ENCODE measurements at regions of chr12 and their contacts with region 1.

Region 1: DNA sequence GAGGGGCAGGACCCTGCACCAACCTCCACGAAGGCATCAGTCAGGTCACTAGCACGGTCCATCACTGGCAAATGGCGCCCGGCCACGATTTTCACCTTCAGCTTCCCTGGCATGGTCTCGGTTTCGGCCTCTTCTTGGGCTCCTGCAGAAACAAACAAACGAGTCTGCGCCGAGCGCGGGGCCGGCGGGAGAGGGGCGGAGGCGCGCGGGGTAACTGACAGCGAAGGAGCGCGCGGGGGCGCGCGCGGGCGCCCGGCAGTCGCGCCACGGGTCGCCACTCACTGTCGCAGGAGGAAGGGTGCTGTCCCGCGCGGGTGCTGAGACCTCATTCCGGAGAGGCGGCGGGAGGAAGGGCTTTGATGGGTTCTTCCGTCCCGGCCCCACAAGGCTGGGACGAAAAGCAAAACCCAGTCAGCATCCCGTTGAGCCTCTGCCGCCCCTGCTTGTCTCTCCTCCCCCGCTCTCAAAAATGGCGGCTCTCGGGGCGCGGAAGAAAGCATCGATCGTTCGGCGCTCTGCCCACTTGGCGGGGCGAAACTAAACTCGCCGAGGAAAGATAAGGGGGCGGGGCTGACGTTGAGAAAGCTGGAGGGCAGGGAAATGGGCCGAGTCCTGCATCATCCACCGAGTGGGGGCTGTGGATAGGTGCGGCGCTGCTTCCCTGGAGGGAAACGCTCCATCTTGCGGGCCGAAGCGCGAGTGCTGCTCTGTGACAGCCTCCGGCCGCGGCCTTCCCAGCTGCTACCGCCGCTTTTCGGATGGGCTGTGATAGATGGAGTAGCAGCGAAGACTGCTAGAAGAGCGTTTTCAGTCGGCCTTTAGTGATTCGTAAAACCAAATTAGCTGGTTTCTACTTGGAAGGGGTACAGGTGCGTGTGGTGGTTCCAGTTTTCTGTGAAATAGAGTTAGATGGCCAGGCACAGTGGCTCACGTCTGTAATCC is at the start of gene C2CD5:
- DNase-seq: peak; percentile 97
- ATAC-seq: peak; percentile 88
- H3K4me3 Mint-ChIP-seq: peak within 1 kb of the TSS; percentile 96
- H3K27ac Mint-ChIP-seq: peak within 1 kb of the TSS; percentile 94
- H3K4me1 Mint-ChIP-seq: peaks cover 36% of the 10 kb centered on the region
- H3K27me3 Mint-ChIP-seq: peaks cover 4% of the 10 kb centered on the region
- total RNA-seq, gene C2CD5: 29.5 to 31.6 TPM

Region 2: GRCh38 chr12:21657326-21658077 is 886.8 kb before region 1 on chr12 and contains the start of gene LDHB:
- CTCF ChIA-PET with region 1: no interaction called
- POLR2A ChIA-PET with region 1: no interaction called
- intact Hi-C with region 1: loop called in 1 of 2 experiments (anchors 1 kb)
- DNase-seq: peak; percentile 97
- ATAC-seq: peak; percentile 97
- H3K4me3 Mint-ChIP-seq: peak within 1 kb of the TSS; percentile 81
- H3K27ac Mint-ChIP-seq: peak within 1 kb of the TSS; percentile 99
- H3K4me1 Mint-ChIP-seq: peaks cover 45% of the 10 kb centered on the region
- H3K27me3 Mint-ChIP-seq: no peaks in the 10 kb centered on the region
- total RNA-seq, gene LDHB: 918 to 1,852 TPM

Region 3: GRCh38 chr12:22046090-22046967 is 498.0 kb before region 1 on chr12 and contains the start of gene CMAS:
- CTCF ChIA-PET with region 1: no interaction called
- POLR2A ChIA-PET with region 1: no interaction called
- intact Hi-C with region 1: loop called in 1 of 2 experiments (anchors 1 kb)
- DNase-seq: peak; percentile 90
- ATAC-seq: peak; percentile 88
- H3K4me3 Mint-ChIP-seq: peak within 1 kb of the TSS; percentile 82
- H3K27ac Mint-ChIP-seq: peak within 1 kb of the TSS; percentile 92
- H3K4me1 Mint-ChIP-seq: peaks cover 51% of the 10 kb centered on the region
- H3K27me3 Mint-ChIP-seq: no peaks in the 10 kb centered on the region
- total RNA-seq, gene CMAS: 33.5 to 52.1 TPM

Region 4: GRCh38 chr12:22255097-22255496 is 289.2 kb before region 1 on chr12:
- CTCF ChIA-PET with region 1: no interaction called
- POLR2A ChIA-PET with region 1: no interaction called
- intact Hi-C with region 1: no loop called
- DNase-seq: no peak
- ATAC-seq: no peak
- H3K4me3 Mint-ChIP-seq: no peak overlapping the region
- H3K27ac Mint-ChIP-seq: no peak overlapping the region
- H3K4me1 Mint-ChIP-seq: peaks cover 3% of the 10 kb centered on the region
- H3K27me3 Mint-ChIP-seq: no peaks in the 10 kb centered on the region

Region 5: GRCh38 chr12:22562036-22563028 is 18.0 kb after region 1 on chr12:
- CTCF ChIA-PET with region 1: no interaction called
- POLR2A ChIA-PET with region 1: no interaction called
- intact Hi-C with region 1: no loop called
- DNase-seq: no peak
- ATAC-seq: peak; percentile 39
- H3K4me3 Mint-ChIP-seq: no peak overlapping the region
- H3K27ac Mint-ChIP-seq: no peak overlapping the region
- H3K4me1 Mint-ChIP-seq: peaks cover 5% of the 10 kb centered on the region
- H3K27me3 Mint-ChIP-seq: peaks cover 5% of the 10 kb centered on the region

Region 6: DNA sequence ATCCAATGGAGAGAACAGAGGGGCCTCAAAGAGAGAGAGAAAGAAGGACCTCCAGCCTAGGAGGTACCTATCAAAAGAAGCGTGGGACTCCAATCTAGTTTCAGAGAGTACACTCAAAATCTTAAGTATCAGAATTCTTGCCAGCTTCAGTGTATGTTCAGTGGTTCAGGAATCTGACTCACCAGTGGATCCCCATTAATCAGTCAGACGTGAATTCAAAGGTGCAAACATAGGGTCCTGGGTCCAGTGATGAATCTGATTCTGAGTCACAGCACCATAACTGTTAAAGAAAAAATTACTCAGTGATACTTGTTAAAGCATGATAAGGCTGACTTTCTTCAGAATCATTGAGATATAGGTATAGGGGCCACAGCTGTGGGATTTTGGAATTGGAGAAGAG is 113.9 kb after region 1 on chr12:
- CTCF ChIA-PET with region 1: no interaction called
- POLR2A ChIA-PET with region 1: no interaction called
- intact Hi-C with region 1: loop called in 1 of 2 experiments (anchors 1 kb)
- DNase-seq: peak; percentile 47
- ATAC-seq: peak; percentile 97
- H3K4me3 Mint-ChIP-seq: peak overlapping the region; percentile 16
- H3K27ac Mint-ChIP-seq: peak overlapping the region; percentile 77
- H3K4me1 Mint-ChIP-seq: peaks cover 31% of the 10 kb centered on the region
- H3K27me3 Mint-ChIP-seq: no peaks in the 10 kb centered on the region